IMR-90 (cell line): ENCODE measurements at regions of chr2 and their contacts with region 1.

Region 1: GRCh38 chr2:119106301-119106897 is 52.2 kb downstream of the C1QL2 start:
- DNase-seq: peak; percentile 33
- ATAC-seq: no peak
- H3K4me3 ChIP-seq: no peak overlapping the region
- H3K27ac ChIP-seq: no peak overlapping the region
- H3K4me1 ChIP-seq: no peaks in the 10 kb centered on the region
- H3K27me3 ChIP-seq: no peaks in the 10 kb centered on the region
- CTCF ChIP-seq: no peak
- POLR2A ChIP-seq: no peak
- RAD21 ChIP-seq: no peak

Region 2: GRCh38 chr2:119160361-119160990 is 54.1 kb after region 1 on chr2:
- CTCF ChIA-PET with region 1: no interaction called
- POLR2A ChIA-PET with region 1: no interaction called
- dilution Hi-C with region 1: no loop called
- in situ Hi-C with region 1: no loop called
- intact Hi-C with region 1: loop called (anchors 5 kb)
- DNase-seq: no peak
- ATAC-seq: no peak
- H3K4me3 ChIP-seq: no peak overlapping the region
- H3K27ac ChIP-seq: no peak overlapping the region
- H3K4me1 ChIP-seq: no peaks in the 10 kb centered on the region
- H3K27me3 ChIP-seq: peaks cover 48% of the 10 kb centered on the region
- CTCF ChIP-seq: no peak
- POLR2A ChIP-seq: no peak
- RAD21 ChIP-seq: no peak

Region 3: GRCh38 chr2:119753041-119753929 is 646.9 kb after region 1 on chr2:
- CTCF ChIA-PET with region 1: no interaction called
- POLR2A ChIA-PET with region 1: no interaction called
- dilution Hi-C with region 1: no loop called
- in situ Hi-C with region 1: no loop called
- intact Hi-C with region 1: no loop called
- DNase-seq: peak; percentile 56
- ATAC-seq: peak; percentile 81
- H3K4me3 ChIP-seq: no peak overlapping the region
- H3K27ac ChIP-seq: no peak overlapping the region
- H3K4me1 ChIP-seq: peaks cover 1% of the 10 kb centered on the region; the same call in 1 of the 2 replicates
- H3K27me3 ChIP-seq: peaks cover 2% of the 10 kb centered on the region; the same call in 1 of the 2 replicates
- CTCF ChIP-seq: peak; percentile 78
- POLR2A ChIP-seq: no peak
- RAD21 ChIP-seq: peak; percentile 78